ENCODE measurements at regions of chr2 and their contacts with region 1.

Region 1: DNA sequence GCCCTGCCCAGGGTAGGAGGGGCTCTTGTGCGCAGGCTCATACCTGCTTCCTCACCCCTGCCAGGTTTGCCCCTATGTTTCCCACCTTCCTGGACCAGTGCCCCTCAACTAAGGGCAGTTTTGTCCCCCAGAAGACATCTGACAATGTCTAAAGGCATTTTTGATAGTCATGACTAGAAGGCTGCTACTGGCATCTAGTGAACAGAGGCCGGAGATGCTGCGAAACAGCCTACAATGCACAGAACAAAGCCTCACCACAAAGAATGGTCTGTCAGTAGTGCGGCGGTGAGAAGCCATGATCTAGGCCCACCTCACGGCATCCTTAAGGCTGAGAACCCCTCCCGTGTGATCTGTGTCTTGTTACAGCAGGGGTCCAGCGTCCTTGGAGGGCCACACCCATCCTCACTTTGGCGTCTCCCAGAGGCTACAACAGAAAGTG is 96.0 kb downstream of the TMEM17 start:
- DNase-seq: no peak
- H3K4me3 ChIP-seq: no peak overlapping the region
- H3K27ac ChIP-seq: no peak overlapping the region
- H3K4me1 ChIP-seq: peaks cover 7 to 12% (median 9%) of the 10 kb centered on the region in 4 experiments; a peak in 6 of 7 replicates
- H3K27me3 ChIP-seq: no peaks in the 10 kb centered on the region
- CTCF ChIP-seq: peak in 2 of 3 experiments; percentile 16 to 28; a peak in 2 of 4 replicates
- EP300 ChIP-seq: no peak
- POLR2A ChIP-seq: no peak
- RAD21 ChIP-seq: peak; percentile 55 to 69

Region 2: DNA sequence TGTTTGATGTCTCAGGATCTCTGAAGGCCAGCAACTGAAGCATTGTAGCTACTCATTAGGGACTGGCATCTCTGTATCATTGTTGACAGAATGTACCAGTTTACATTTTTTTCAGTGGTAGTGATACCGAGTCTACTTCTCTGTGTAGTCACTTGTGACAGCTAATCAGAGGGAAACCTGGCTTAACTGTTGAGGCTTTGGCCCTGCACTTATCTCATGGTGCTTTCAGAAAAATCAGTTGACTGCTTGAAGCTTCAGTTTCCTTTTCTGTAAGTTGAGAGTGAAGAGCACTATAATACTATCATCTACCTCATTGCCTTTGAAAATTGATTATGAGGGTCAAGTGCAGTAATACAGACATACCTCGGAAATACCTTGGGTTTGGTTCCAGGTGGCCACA is 414.5 kb before region 1 on chr2:
- CTCF ChIA-PET with region 1: interaction called, 20 read pairs
- POLR2A ChIA-PET with region 1: no interaction called
- DNase-seq: no peak
- H3K4me3 ChIP-seq: no peak overlapping the region
- H3K27ac ChIP-seq: no peak overlapping the region
- H3K4me1 ChIP-seq: no peaks in the 10 kb centered on the region
- H3K27me3 ChIP-seq: no peaks in the 10 kb centered on the region
- CTCF ChIP-seq: no peak
- EP300 ChIP-seq: no peak
- POLR2A ChIP-seq: no peak
- RAD21 ChIP-seq: no peak

Region 3: GRCh38 chr2:62000538-62000937 is 409.5 kb before region 1 on chr2:
- CTCF ChIA-PET with region 1: interaction called, 20 read pairs
- POLR2A ChIA-PET with region 1: no interaction called
- DNase-seq: no peak
- H3K4me3 ChIP-seq: no peak overlapping the region
- H3K27ac ChIP-seq: no peak overlapping the region
- H3K4me1 ChIP-seq: no peaks in the 10 kb centered on the region
- H3K27me3 ChIP-seq: no peaks in the 10 kb centered on the region
- CTCF ChIP-seq: peak in 1 of 3 experiments; percentile 33; a peak in 2 of 4 replicates
- EP300 ChIP-seq: no peak
- POLR2A ChIP-seq: no peak
- RAD21 ChIP-seq: peak; percentile 63 to 74

Region 4: DNA sequence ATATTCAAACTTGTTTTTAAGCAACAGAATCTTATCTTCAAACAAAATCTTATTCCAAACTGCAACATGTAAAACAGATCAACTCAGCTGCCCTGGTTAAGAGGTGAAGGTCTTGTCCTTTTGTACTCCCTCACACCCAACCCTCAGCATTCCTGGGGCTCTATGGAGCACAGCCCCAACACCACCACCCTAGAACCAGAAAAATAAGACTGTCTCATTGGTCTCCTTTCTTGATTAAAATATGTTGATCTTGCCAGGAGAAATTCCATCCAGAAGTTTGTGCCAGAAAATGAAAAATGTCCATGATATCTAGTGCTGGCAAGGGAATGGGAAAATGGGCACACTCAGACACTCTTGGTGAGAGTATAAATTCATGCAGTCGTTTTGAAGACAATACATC is 158.0 kb after region 1 on chr2:
- CTCF ChIA-PET with region 1: no interaction called
- POLR2A ChIA-PET with region 1: no interaction called
- DNase-seq: no peak
- H3K4me3 ChIP-seq: no peak overlapping the region
- H3K27ac ChIP-seq: no peak overlapping the region
- H3K4me1 ChIP-seq: peaks cover 0 to 9% (median 3%) of the 10 kb centered on the region in 4 experiments; a peak in 6 of 7 replicates
- H3K27me3 ChIP-seq: peaks cover 0 to 16% (median 9%) of the 10 kb centered on the region in 4 experiments; a peak in 5 of 7 replicates
- CTCF ChIP-seq: no peak
- EP300 ChIP-seq: no peak
- POLR2A ChIP-seq: no peak
- RAD21 ChIP-seq: no peak

Measured in H1 (cell line).